Activated CD4-positive, alpha-beta T cell treated with anti-CD3 and anti-CD28 coated beads, Interleukin-2, amount 10 ng/mL, durations not matched to agents 24 days and 14 days (primary cell): ENCODE measurements at regions of chr2 and their contacts with region 1.

Region 1: DNA sequence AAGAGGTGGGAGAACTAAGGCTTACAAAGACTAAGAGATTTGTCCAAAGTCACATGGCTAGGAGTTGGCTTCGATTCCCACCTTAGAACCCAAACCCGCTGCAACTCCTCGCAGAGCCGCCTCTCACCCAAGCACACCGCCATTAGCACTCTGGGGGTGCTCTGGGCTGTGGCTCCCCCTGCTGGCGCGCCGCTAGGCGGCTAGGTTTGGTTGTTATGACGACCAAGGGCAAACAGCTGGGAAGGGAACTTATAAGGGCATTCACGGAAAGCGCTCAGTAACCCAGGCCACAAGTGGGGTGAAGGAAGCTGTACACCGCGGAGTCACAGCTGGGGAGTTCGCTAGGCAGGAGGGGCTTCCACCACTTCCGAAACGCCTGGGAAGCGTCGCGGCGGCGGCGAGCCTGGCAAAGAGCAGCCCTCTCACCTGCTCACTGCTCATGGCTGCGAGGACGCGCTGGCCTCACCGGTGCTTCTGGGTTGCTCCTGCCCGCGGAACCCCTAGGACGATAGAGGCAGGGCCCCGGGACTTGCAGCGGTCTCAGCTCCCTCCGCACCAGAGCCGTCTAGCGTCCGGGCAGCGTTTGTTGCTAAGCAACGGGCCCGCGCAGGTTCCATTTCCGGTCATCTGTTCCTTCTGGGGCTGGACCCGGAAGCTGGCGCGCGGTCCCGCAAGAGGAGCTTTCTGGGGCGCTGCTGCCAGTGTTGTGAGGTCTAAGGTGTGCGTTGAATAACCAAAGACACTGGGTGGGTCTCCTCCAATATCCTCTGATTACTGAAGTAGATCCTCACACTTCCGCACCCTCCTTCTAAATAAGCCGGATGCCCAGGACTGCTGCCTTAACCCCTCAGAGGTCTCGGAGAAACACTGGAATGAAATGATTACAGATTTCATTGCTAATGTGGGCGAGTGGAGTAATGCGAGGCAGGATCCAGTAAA is at the start of gene DNAH7:
- DNase-seq: peak; percentile 98
- H3K4me3 Mint-ChIP-seq: peak within 1 kb of the TSS; percentile 88
- H3K27ac Mint-ChIP-seq: peak within 1 kb of the TSS; percentile 81
- H3K4me1 Mint-ChIP-seq: peaks cover 7% of the 10 kb centered on the region
- H3K27me3 Mint-ChIP-seq: peaks cover 26% of the 10 kb centered on the region
- total RNA-seq, gene DNAH7: not detected in 2 replicates

Region 2: DNA sequence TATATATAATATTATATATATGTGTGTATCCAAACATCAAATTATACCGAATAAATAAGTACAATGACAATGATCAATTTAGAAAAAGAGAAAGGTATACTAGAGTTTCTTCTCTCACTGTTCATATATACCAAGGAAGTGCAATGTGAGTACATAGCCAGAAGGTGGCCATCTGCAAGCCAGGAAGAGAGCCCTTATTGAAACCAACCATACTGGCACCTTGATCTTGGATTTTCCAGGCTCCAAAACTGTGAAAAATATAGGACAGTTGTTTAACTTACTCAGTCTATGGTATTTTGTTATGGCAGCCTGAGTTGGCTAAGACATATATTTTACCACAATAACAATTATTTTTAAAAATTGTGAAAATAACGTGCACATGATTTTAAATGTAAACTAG is 1901.7 kb before region 1 on chr2:
- intact Hi-C with region 1: loop called (anchors 5 kb)
- DNase-seq: peak; percentile 60
- H3K4me3 Mint-ChIP-seq: no peak overlapping the region
- H3K27ac Mint-ChIP-seq: no peak overlapping the region
- H3K4me1 Mint-ChIP-seq: no peaks in the 10 kb centered on the region
- H3K27me3 Mint-ChIP-seq: peaks cover 2% of the 10 kb centered on the region

Region 3: GRCh38 chr2:194545978-194546377 is 1522.6 kb before region 1 on chr2:
- intact Hi-C with region 1: loop called (anchors 10 kb)
- DNase-seq: no peak
- H3K4me3 Mint-ChIP-seq: no peak overlapping the region
- H3K27ac Mint-ChIP-seq: no peak overlapping the region
- H3K4me1 Mint-ChIP-seq: no peaks in the 10 kb centered on the region
- H3K27me3 Mint-ChIP-seq: no peaks in the 10 kb centered on the region

Region 4: DNA sequence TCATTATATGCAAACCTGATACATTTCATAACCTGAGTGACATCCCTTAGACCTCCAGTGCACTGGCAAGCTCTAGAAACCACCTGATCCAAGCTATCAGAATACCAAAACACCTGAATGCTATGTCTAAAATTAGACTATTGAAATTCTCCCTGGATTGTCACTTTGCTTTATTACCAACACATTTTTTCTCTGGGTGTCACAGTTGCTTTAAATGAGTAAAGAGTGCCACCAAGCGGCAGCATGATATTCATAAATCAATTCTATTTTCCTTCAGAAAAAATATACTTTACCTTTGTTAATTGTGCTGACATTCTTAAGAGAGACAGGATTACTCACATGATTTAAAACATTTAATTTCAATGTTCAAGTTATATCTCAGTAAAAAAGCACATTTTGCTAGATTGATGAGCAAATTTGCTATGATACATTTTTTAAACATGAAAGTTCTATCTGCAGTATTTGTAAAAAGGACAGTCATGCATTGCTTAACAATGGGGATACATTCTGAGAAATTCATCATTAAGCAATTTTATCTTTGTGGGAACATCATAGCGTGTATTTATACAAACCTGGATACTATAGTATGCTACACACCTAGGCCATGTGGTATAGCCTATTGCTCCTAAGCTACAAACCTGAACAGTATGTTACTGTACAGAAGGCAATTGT is 750.0 kb before region 1 on chr2:
- intact Hi-C with region 1: loop called (anchors 2 kb)
- DNase-seq: peak; percentile 82
- H3K4me3 Mint-ChIP-seq: no peak overlapping the region
- H3K27ac Mint-ChIP-seq: no peak overlapping the region
- H3K4me1 Mint-ChIP-seq: peaks cover 10% of the 10 kb centered on the region
- H3K27me3 Mint-ChIP-seq: no peaks in the 10 kb centered on the region

Region 5: GRCh38 chr2:195664528-195664927 is 404.0 kb before region 1 on chr2:
- intact Hi-C with region 1: loop called (anchors 1 kb)
- DNase-seq: no peak
- H3K4me3 Mint-ChIP-seq: no peak overlapping the region
- H3K27ac Mint-ChIP-seq: no peak overlapping the region
- H3K4me1 Mint-ChIP-seq: peaks cover 24% of the 10 kb centered on the region
- H3K27me3 Mint-ChIP-seq: no peaks in the 10 kb centered on the region

Region 6: DNA sequence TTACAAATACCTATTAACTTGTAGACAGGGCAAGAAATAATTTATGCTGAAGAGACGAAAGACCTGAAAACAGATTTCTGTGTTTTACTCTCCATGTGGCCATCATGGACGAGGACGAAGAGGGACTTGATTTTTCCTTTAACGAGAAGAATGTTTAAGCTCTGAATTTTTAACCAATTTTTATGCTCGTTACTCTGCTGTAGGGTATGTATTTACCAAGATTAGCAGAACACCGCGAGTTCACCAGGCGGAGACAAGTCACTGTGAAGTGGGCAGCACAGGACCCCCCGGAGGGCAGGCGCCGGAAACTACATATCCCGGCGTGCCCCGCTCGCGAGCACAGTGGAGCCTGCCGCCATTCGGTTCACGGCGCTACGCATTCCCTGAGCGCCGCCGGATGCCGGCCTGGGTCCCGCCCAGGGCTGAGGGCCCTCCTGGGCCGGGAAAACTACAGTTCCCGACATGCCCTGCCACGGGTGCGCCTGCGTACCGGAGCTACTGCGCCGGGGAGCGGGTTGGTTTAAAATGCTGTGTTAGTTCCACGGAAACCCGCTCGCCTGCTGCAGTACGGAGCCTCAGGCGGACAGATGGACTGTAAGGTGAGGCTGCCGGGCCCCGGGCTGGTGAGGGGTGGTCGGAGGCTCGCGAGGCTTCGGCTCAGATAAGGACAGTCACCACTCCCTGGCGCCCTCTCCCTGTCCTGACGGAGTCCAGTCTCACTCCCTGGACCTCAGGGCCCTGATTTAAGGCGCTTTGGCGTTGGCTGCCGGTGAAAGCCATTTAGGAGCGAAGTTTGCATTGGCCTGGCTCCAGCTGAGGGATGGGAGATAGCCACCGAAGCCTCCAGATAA is 570.9 kb after region 1 on chr2 and contains the start of gene CCDC150:
- intact Hi-C with region 1: loop called (anchors 1 kb)
- DNase-seq: peak; percentile 99
- H3K4me3 Mint-ChIP-seq: peak within 1 kb of the TSS; percentile 96
- H3K27ac Mint-ChIP-seq: peak within 1 kb of the TSS; percentile 85
- H3K4me1 Mint-ChIP-seq: peaks cover 21% of the 10 kb centered on the region
- H3K27me3 Mint-ChIP-seq: peaks cover 12% of the 10 kb centered on the region
- total RNA-seq, gene CCDC150: 18.2 and 21.1 TPM in 2 replicates